ENCODE measurements at regions of chrX and their contacts with region 1.

Region 1: GRCh38 chrX:69538321-69538876 is 34.3 kb downstream of the NALF2 start:
- DNase-seq: no peak
- ATAC-seq: peak; percentile 97
- H3K4me3 ChIP-seq: no peak overlapping the region
- H3K27ac ChIP-seq: no peak overlapping the region
- H3K4me1 ChIP-seq: no peaks in the 10 kb centered on the region
- H3K27me3 ChIP-seq: no peaks in the 10 kb centered on the region
- CTCF ChIP-seq: peak; percentile 44 to 71 (median 70)
- EP300 ChIP-seq: no peak
- POLR2A ChIP-seq: no peak
- RAD21 ChIP-seq: peak; percentile 60

Region 2: DNA sequence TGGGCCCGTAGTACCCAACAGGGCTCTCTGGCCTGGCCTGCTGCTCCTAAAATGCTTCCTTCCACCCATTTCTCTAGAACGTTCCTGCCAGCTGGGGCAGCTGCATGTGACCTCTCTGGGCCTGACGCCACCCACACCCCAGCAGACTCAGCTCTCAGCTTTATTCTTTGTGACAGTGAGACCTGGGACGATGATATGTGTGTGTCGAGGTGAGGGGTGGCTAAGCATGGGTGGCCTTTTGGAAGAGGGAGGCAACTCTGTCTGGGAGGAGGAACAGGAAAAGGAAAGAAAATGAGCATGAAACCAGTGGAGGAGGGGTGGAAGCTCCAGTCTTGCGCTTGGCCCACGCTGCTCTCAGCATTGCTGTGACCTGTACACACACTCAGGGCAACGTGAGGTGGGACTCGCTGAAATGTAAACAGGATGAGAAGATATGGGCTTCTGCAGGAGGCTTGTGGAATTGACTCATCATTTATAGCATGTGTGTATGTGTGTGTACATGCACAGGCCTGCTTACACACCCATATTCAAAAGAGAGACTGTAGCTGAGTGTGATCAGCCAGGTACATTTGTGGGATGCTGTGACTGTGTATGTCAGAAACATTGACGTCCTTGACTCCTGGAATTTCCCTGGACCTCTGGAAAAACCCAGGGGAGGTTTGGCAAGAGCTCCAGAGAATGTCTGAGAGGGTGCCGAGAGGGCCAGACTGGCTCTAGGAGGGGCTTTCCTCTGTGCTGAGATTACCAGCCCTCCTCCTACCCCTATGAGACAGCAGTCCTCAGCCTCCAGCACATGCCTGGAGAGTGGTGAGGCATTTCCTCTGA is 511.0 kb before region 1 on chrX:
- CTCF ChIA-PET with region 1: no interaction called
- POLR2A ChIA-PET with region 1: no interaction called
- RAD21 ChIA-PET with region 1: no interaction called
- SMC1A ChIA-PET with region 1: no interaction called
- in situ Hi-C with region 1: no loop called
- intact Hi-C with region 1: no loop called
- DNase-seq: no peak
- ATAC-seq: peak; percentile 72
- H3K4me3 ChIP-seq: no peak overlapping the region
- H3K27ac ChIP-seq: peak overlapping the region; percentile 66
- H3K4me1 ChIP-seq: peaks cover 23% of the 10 kb centered on the region
- H3K27me3 ChIP-seq: no peaks in the 10 kb centered on the region
- CTCF ChIP-seq: no peak
- EP300 ChIP-seq: no peak
- POLR2A ChIP-seq: no peak
- RAD21 ChIP-seq: no peak

Region 3: DNA sequence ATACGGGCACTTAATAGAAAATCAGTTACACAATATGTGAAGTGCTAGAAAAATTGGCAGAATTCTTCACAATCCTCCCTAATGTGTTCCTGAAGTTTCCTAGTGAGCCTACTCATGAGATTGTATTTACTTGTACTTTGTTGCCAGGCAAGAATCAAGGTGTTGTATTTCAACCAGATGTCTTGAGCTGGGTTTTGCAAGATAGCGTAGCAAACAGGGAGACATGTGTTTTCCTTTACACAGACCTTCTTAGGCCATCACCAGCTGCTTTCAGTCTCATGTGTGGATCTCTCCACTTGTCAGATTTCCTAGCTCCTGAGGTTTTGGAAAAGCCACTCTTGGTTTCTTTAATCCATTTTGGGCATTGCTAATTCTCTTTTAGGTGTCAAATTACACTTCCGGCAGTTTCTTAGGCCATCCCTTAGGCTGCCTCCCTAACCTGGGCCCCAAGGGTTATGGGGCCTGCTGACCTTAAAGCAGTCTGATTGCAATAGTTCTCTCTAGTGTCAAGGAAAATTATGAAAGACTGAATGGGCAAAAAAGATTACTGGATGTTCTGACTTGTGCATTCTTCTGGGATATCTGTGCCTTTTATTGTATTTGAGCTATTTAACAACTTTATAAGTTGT is 65.3 kb after region 1 on chrX:
- CTCF ChIA-PET with region 1: no interaction called
- POLR2A ChIA-PET with region 1: no interaction called
- RAD21 ChIA-PET with region 1: no interaction called
- SMC1A ChIA-PET with region 1: no interaction called
- in situ Hi-C with region 1: no loop called
- intact Hi-C with region 1: no loop called
- DNase-seq: no peak
- ATAC-seq: no peak
- H3K4me3 ChIP-seq: no peak overlapping the region
- H3K27ac ChIP-seq: no peak overlapping the region
- H3K4me1 ChIP-seq: no peaks in the 10 kb centered on the region
- H3K27me3 ChIP-seq: no peaks in the 10 kb centered on the region
- CTCF ChIP-seq: no peak
- EP300 ChIP-seq: no peak
- POLR2A ChIP-seq: no peak
- RAD21 ChIP-seq: no peak

Region 4: GRCh38 chrX:69615779-69616456 is 77.5 kb after region 1 on chrX and contains the start of gene EDA:
- CTCF ChIA-PET with region 1: interaction called, 15 read pairs
- POLR2A ChIA-PET with region 1: no interaction called
- RAD21 ChIA-PET with region 1: no interaction called
- SMC1A ChIA-PET with region 1: interaction called, 7 read pairs
- in situ Hi-C with region 1: no loop called
- intact Hi-C with region 1: loop called (anchors 2 kb)
- DNase-seq: no peak
- ATAC-seq: peak; percentile 84
- H3K4me3 ChIP-seq: no peak within 1 kb of the TSS
- H3K27ac ChIP-seq: no peak within 1 kb of the TSS
- H3K4me1 ChIP-seq: no peaks in the 10 kb centered on the region
- H3K27me3 ChIP-seq: no peaks in the 10 kb centered on the region
- CTCF ChIP-seq: no peak
- EP300 ChIP-seq: no peak
- POLR2A ChIP-seq: no peak
- RAD21 ChIP-seq: no peak
- polyA plus RNA-seq, gene EDA: not detected

Region 5: GRCh38 chrX:69718102-69718501 is 179.7 kb after region 1 on chrX:
- CTCF ChIA-PET with region 1: no interaction called
- POLR2A ChIA-PET with region 1: no interaction called
- RAD21 ChIA-PET with region 1: no interaction called
- SMC1A ChIA-PET with region 1: no interaction called
- in situ Hi-C with region 1: no loop called
- intact Hi-C with region 1: no loop called
- DNase-seq: no peak
- ATAC-seq: no peak
- H3K4me3 ChIP-seq: no peak overlapping the region
- H3K27ac ChIP-seq: no peak overlapping the region
- H3K4me1 ChIP-seq: no peaks in the 10 kb centered on the region
- H3K27me3 ChIP-seq: no peaks in the 10 kb centered on the region
- CTCF ChIP-seq: no peak
- EP300 ChIP-seq: no peak
- POLR2A ChIP-seq: no peak
- RAD21 ChIP-seq: no peak

Region 6: DNA sequence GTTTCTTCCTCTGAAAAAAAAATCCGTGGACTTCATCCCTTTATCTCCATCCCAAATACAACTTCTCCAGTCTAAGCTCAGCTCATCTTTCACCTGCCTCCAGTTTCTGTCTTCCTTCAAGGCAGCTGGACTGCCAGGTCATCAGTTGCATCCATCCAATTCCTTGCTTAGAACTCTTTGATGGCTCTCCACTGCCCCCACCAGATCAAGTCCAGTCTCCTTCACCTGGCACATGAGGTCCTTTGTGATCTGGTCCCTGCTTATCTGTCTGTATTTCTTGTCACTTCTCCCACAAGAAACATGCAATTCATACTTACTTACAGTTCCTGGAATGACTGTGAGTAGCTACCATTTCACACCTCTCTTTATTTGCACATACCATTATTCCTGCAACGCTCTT is 557.7 kb after region 1 on chrX:
- CTCF ChIA-PET with region 1: interaction called, 6 read pairs
- POLR2A ChIA-PET with region 1: no interaction called
- RAD21 ChIA-PET with region 1: no interaction called
- SMC1A ChIA-PET with region 1: no interaction called
- in situ Hi-C with region 1: no loop called
- intact Hi-C with region 1: loop called (anchors 2 kb)
- DNase-seq: no peak
- ATAC-seq: no peak
- H3K4me3 ChIP-seq: no peak overlapping the region
- H3K27ac ChIP-seq: no peak overlapping the region
- H3K4me1 ChIP-seq: no peaks in the 10 kb centered on the region
- H3K27me3 ChIP-seq: no peaks in the 10 kb centered on the region
- CTCF ChIP-seq: 0 out of 6 replicates have a peak, but pooled peaks of 1 of the 3 experiments have one; percentile 9
- EP300 ChIP-seq: no peak
- POLR2A ChIP-seq: no peak
- RAD21 ChIP-seq: no peak

Region 7: DNA sequence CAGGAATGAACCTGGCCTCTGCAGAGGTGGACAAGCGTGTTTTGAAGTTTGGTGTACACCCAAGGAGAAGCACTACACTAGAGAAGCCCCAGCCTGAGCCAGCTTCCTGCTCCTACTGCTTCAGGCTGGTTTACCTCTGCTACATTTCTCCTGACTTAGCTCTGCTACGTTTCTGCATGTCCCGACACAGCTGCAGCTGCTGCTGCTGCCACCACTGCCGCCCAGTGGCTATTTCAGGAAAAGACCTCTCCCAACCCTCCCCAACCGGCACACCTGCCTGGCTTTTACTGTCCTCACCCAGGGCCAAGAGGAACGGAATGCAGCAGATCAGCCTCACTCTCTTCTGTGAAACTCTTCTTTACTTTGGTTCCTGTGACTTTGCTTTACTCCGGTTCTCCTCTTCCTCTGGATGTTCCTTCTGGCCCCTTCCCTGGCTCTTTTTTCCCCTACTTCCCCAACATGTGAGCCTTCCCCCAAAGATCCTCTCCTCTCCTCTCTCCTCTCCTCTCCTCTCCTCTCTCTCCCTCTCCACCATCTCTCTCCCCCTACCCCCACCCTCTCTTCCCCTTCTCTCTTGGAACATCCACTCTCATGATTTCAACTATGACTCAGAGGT is 724.7 kb after region 1 on chrX:
- CTCF ChIA-PET with region 1: no interaction called
- POLR2A ChIA-PET with region 1: no interaction called
- RAD21 ChIA-PET with region 1: no interaction called
- SMC1A ChIA-PET with region 1: no interaction called
- in situ Hi-C with region 1: no loop called
- intact Hi-C with region 1: no loop called
- DNase-seq: no peak
- ATAC-seq: peak; percentile 95
- H3K4me3 ChIP-seq: no peak overlapping the region
- H3K27ac ChIP-seq: no peak overlapping the region
- H3K4me1 ChIP-seq: no peaks in the 10 kb centered on the region
- H3K27me3 ChIP-seq: no peaks in the 10 kb centered on the region
- CTCF ChIP-seq: peak; percentile 46 to 73 (median 65)
- EP300 ChIP-seq: no peak
- POLR2A ChIP-seq: no peak
- RAD21 ChIP-seq: peak; percentile 49